ENCODE measurements at regions of chr15 and their contacts with region 1.

Region 1: DNA sequence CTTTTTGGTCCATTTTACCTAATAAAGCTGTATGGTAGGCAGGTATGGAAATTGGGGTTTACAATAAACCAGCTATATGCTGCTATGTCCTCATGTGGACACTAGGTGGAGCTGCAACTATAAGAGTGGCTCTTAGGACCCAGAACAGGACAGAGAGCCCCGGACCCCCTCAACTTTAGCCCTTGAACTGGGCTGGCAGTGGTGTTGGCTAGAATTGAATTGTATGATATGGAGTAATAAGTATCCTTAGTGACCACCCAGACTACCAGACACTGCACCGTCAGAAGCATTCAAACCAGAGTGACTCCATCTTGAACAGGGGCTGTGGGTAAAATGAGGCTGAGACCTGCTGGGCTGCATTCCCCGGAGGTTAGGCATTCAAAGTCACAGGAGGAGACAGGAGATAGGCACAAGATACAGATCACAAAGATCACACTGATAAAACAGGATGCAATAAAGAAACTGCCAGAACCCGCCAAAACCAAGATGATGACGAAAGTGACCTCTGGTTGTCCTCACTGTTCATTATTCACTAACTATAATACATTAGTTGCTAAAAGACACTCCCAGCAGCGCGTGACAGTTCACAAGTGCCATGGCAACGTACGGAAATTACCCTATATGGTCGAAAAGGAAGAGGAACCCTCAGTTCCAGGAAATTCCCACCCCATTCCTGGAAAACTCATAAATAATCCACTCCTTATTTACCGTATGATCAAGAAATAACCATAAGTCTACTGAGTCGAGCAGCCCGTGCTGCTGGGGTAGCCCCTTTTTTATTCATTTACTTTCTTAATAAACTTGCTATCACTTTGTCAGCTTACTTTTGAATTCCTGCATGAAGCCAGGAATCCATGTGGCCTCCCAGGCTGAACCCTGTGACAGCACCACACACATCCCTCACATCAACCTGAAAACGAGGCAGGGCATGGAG is 68.7 kb upstream of the BLM start:
- DNase-seq: peak; percentile 81 to 90
- ATAC-seq: peak; percentile 88
- H3K4me3 ChIP-seq: no peak overlapping the region
- H3K27ac ChIP-seq: no peak overlapping the region
- H3K4me1 ChIP-seq: no peaks in the 10 kb centered on the region
- H3K27me3 ChIP-seq: no peaks in the 10 kb centered on the region

Region 2: GRCh38 chr15:90352109-90352893 is 296.1 kb before region 1 on chr15 and contains the start of gene ZNF774:
- intact Hi-C with region 1: no loop called
- DNase-seq: peak; percentile 92 to 93
- ATAC-seq: peak; percentile 98
- H3K4me3 ChIP-seq: peak within 1 kb of the TSS; percentile 76 to 92
- H3K27ac ChIP-seq: peak within 1 kb of the TSS in 1 of 2 donors; percentile 58
- H3K4me1 ChIP-seq: no peaks in the 10 kb centered on the region
- H3K27me3 ChIP-seq: no peaks in the 10 kb centered on the region
- total RNA-seq, gene ZNF774: 6.1 to 7.4 TPM

Region 3: GRCh38 chr15:90598031-90598577 is 50.3 kb before region 1 on chr15:
- intact Hi-C with region 1: no loop called
- DNase-seq: no peak
- ATAC-seq: no peak
- H3K4me3 ChIP-seq: no peak overlapping the region
- H3K27ac ChIP-seq: peak overlapping the region; percentile 8 to 87
- H3K4me1 ChIP-seq: peaks cover 0 to 8% of the 10 kb centered on the region in 2 donors
- H3K27me3 ChIP-seq: no peaks in the 10 kb centered on the region

Region 4: DNA sequence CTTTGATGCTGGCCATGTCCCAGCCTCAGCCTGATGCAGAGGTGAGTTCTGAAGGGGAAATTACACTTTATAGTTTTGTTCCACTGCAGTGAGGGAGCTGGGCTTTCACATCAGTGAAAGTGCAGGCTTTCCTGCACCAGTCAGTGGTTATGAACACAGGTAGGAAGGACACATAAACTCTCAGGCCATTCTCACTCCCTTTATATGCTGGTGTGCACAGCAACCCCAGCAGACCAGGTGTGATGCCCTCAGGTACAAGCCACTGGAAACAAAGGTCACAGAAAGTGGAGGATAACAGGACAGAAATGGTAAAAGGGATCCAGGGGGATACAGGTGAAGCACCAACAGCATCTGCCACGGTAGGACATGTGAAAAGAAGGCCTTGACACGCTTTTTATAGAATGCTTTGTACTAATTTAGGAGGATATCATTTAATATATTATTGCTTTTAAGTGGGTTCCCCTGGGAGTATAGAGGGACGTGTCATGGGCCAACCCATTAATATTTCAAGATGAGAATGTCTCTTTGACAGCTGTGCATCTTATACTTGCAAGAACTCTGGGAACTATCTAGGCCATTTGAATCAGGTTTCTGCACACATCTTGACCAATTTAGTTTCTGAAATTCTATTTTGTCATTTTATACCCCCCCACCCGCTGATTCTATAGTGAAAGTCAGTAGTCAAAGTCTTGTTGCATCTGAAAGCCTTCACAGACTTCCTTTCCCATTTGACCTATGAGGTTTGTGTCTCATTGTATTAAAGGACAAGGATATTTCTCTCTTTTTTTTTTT is 43.8 kb after region 1 on chr15:
- intact Hi-C with region 1: loop called (anchors 2 to 5 kb)
- DNase-seq: no peak
- ATAC-seq: no peak
- H3K4me3 ChIP-seq: no peak overlapping the region
- H3K27ac ChIP-seq: no peak overlapping the region
- H3K4me1 ChIP-seq: no peaks in the 10 kb centered on the region
- H3K27me3 ChIP-seq: no peaks in the 10 kb centered on the region